Heart right ventricle (tissue), 16 donors: ENCODE measurements at regions of chr19 and their contacts with region 1.

Region 1: DNA sequence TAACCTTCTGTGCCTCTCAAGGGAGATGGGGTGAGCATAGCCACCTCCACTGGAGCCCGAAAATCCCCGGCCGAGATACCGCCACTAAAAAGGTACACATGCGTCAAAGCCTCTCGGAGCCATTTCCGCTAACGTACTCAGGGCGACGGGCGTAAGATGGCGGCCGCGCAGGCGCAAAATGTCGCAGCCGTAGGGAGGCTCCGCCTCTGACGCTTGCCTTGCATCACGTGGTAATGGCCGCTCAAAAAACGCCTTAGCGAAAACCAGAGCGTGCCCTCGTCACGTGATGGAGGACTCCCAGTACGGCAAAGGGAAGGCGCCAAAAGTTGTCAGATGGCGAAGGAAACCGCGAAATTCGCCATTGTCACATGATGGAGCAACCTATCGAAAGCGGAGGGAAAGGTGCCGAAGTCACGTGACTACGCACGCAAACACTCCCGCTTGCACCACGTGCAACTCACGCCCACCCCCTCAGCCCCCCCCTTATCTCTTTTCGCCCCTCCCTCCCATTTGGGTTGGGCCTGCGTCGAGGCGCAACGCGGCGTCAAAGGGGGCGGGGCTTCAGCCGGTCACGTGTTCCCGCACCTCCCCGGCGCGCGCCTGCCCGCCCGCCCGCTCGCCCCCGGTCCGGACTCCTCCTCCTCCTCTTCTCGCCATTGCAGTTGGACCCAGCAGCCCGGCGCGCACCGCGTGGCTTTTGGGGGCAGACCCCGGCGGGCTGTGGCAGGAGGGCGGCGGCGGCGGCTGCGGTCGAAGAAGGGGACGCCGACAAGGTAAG is at the start of gene ILF3:
- DNase-seq: peak; percentile 99 to 100
- ATAC-seq: peak; percentile 90 to 97 (median 94)
- H3K4me3 ChIP-seq: peak within 1 kb of the TSS; percentile 67 to 100 (median 92)
- H3K27ac ChIP-seq: peak within 1 kb of the TSS; percentile 84 to 99 (median 96)
- H3K4me1 ChIP-seq: peaks cover 7 to 52% (median 40%) of the 10 kb centered on the region in 9 donors
- H3K27me3 ChIP-seq: no peaks in the 10 kb centered on the region
- CTCF ChIP-seq: no peak
- total RNA-seq, gene ILF3: 102 to 129 (median 112) TPM

Region 2: DNA sequence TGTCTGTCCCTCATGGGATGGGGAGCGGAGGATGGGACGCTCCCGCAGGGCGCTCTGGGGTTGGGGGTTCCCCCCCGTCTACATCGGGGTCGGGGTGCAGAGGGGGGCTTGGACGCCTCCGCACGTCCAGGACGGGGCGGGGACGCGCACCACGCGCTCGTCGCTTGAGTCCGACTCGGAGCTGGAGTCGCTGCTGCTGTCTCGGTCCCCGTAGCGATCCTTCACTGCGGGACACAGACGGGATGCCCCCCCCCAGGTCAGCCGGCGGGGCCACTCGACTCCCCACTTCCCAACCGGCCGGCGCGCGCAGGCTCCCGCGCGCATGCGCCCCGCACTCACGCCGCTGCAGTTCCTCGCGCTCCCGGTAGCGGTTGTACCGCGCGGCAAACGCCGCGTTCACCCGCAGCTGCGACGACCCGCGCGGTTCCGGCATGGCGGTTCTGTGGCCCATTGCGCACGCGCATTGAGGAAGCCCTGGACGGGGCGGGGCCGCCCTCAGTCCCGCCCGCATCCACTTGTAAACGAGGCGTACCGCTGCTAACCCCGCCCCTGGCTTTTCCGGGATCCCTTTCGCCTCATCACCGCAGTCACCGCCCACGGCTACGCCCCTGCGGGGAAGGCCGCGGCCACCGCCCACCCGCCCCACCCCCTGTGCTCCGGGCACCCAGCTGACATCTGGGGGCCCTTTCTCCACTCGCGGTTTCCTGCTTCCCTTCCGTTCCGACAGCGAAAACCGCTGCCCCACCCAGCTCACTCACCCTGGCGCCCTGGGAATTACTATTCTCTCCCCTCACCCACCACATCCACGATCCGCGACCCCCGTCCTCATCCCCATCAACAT is 88.1 kb before region 1 on chr19 and contains the start of gene KRI1:
- intact Hi-C with region 1: loop called in 2 of 10 experiments (anchors 5 kb)
- DNase-seq: peak; percentile 98 to 99
- ATAC-seq: peak; percentile 85 to 92 (median 88)
- H3K4me3 ChIP-seq: peak within 1 kb of the TSS; percentile 62 to 94 (median 84)
- H3K27ac ChIP-seq: peak within 1 kb of the TSS; percentile 72 to 94 (median 90)
- H3K4me1 ChIP-seq: peaks cover 4 to 45% (median 39%) of the 10 kb centered on the region in 9 donors
- H3K27me3 ChIP-seq: no peaks in the 10 kb centered on the region
- CTCF ChIP-seq: peak in 7 of 9 donors; percentile 16 to 50 (median 30)
- total RNA-seq, gene KRI1: 8.4 to 14.2 (median 10.3) TPM

Region 3: DNA sequence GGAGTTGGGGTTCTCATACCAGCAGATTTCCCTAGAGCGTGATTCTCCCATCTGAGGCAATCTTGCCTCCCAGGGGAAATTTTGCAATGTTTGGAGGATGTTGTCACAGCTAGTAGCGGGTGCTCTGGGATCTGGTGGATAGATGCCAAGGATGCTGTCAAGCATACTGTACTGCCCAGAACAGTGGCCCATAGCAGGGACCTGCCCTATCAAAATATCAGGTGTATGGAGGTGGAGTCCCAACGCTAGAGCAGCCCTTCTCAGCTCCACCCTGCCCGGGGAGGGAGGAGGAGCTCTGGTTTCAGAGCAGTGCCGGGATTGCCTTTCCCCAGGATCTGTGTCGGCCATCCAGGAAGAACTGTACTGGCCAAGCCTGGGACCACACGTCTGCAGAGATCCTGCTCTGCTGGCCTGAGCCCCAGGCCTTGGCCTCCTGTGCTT is 36.5 kb after region 1 on chr19:
- intact Hi-C with region 1: loop called in 2 of 10 experiments (anchors 5 kb)
- DNase-seq: no peak
- ATAC-seq: no peak
- H3K4me3 ChIP-seq: no peak overlapping the region
- H3K27ac ChIP-seq: no peak overlapping the region
- H3K4me1 ChIP-seq: peaks cover 9 to 33% (median 24%) of the 10 kb centered on the region in 9 donors
- H3K27me3 ChIP-seq: no peaks in the 10 kb centered on the region
- CTCF ChIP-seq: no peak

Region 4: DNA sequence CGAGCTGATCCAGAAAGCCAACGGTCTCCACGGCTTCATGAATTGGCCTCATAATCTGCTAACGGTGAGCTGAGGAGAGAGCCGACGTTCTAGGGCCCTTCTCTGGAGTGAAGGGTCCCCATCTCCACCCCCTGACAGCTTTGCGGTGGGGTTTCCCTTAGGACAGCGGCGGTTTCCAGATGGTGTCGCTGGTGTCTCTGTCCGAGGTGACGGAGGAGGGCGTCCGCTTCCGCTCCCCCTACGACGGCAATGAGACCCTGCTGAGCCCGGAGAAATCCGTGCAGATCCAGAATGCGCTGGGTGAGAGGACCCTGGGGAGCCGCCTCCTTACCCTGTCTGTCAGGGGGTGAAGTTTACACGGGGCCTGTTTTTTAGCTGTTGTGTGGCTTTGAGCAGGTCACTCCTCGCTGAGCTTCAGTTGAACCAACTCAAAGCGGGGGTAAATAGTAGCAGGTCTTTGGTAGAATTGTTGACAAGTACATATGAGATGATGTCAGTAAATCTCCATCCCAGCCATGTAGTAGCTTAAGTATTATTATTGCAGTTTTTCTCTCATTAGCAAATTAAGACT is 48.1 kb after region 1 on chr19:
- intact Hi-C with region 1: loop called in 2 of 10 experiments (anchors 1 to 5 kb)
- DNase-seq: no peak
- ATAC-seq: peak; percentile 21 to 66 (median 50)
- H3K4me3 ChIP-seq: peak overlapping the region; percentile 69 to 100 (median 81)
- H3K27ac ChIP-seq: peak overlapping the region in 7 of 10 donors; percentile 66 to 81 (median 78)
- H3K4me1 ChIP-seq: peaks cover 0 to 19% (median 13%) of the 10 kb centered on the region in 9 donors
- H3K27me3 ChIP-seq: no peaks in the 10 kb centered on the region
- CTCF ChIP-seq: peak in 1 of 9 donors; percentile 31